ENCODE measurements at regions of chr15 and their contacts with region 1.

Region 1: DNA sequence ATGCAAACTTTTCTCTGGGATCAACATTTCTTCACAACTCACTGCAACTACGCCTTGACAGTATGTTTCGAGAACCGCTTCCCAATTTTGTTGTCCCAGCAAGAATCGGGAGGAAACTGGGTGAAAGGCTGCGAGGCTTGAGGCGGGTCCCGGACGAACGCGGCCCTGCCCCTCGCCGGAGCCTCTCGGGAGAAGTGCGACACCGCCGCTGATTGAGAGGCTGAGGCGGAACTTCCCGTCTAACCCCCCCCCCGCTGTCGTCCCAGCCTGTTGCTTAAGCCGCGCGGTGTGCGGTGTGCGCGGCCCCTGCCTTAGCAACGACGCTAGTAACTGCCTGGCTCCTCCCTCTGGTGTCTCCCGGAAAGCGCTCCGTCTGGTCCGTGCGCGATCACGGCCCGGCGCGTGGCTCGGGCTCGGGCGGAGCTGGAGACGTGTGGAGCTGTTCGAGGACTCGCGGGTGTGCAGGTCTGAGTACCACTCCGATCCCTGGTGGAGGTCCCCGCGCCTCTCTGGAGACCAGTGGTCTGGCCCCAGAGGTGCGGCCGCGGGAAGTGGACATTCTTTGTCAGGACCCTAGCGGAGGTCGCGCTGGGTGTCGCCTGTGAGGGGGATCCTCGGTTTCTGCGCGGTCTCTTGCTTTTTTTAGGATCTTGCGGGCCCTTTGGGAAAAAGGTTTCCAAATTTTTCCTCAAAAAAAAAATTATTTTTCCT is at the starts of genes DTWD1 and FAM227B:
- DNase-seq: peak; percentile 96 to 98
- ATAC-seq: peak; percentile 99 to 100 (median 100)
- H3K4me3 ChIP-seq: peak within 1 kb of the TSS; percentile 67 to 92 (median 80)
- H3K27ac ChIP-seq: peak within 1 kb of the TSS; percentile 83 to 96 (median 94)
- H3K4me1 ChIP-seq: peaks cover 0 to 34% (median 21%) of the 10 kb centered on the region in 9 donors
- H3K27me3 ChIP-seq: no peaks in the 10 kb centered on the region
- CTCF ChIP-seq: peak in 1 of 9 donors; percentile 12
- total RNA-seq, gene DTWD1: 14.8 to 23.2 (median 17.7) TPM
- total RNA-seq, gene FAM227B: 10.3 to 22.8 (median 14.6) TPM

Region 2: GRCh38 chr15:49155110-49155833 is 465.5 kb before region 1 on chr15 and contains the start of gene COPS2:
- intact Hi-C with region 1: loop called in 1 of 10 experiments (anchors 5 kb)
- DNase-seq: peak; percentile 86 to 96
- ATAC-seq: peak; percentile 98 to 99 (median 99)
- H3K4me3 ChIP-seq: peak within 1 kb of the TSS; percentile 84 to 98 (median 92)
- H3K27ac ChIP-seq: peak within 1 kb of the TSS; percentile 45 to 94 (median 88)
- H3K4me1 ChIP-seq: peaks cover 2 to 58% (median 41%) of the 10 kb centered on the region in 9 donors
- H3K27me3 ChIP-seq: no peaks in the 10 kb centered on the region
- CTCF ChIP-seq: peak in 1 of 9 donors; percentile 9
- total RNA-seq, gene COPS2: 71.3 to 91.8 (median 86.8) TPM

Region 3: DNA sequence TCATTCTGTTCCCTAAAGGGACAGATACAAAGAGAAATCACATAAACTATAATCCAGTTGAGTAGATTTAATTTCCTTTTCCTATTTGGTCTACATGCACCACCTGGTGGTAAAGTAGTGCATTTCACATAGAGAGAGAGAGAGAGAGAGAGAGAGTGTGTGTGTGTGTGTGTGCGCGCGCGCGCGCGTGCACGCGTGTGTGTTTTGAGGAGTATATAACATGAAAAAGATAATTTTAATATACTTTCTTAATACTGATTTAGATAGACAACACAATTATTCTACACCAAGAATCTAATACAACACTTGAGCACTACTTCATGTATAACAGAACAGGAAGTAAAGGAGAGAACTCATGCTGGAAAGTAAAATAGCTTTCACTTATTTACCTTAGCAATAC is 198.8 kb before region 1 on chr15:
- intact Hi-C with region 1: loop called in 4 of 10 experiments (anchors 5 to 10 kb)
- DNase-seq: peak; percentile 24 to 47
- ATAC-seq: peak; percentile 45 to 78 (median 52)
- H3K4me3 ChIP-seq: peak overlapping the region in 9 of 10 donors; percentile 2 to 54 (median 23)
- H3K27ac ChIP-seq: peak overlapping the region in 4 of 10 donors; percentile 65 to 80 (median 76)
- H3K4me1 ChIP-seq: peaks cover 0 to 8% (median 0%) of the 10 kb centered on the region in 9 donors
- H3K27me3 ChIP-seq: no peaks in the 10 kb centered on the region
- CTCF ChIP-seq: peak; percentile 39 to 83 (median 70)

Region 4: DNA sequence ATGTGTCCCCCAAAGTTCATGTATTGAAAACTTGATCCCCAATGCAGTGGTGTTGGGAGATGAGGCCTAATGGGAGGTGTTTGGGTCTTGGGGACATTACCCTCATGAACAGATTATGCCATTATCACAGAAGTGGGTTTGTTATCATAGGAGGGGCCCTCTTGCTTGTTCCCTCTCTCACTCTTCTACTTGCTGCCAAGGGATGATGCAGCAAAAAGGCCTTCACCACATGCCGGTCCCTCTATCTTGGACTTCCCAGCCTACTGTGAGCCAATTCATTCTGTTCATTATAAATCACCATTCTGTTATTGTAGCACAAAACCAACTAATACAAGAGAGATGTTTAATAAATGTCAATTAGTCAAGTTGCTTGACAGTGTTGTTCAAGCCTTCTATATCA is 47.4 kb before region 1 on chr15:
- intact Hi-C with region 1: loop called in 1 of 10 experiments (anchors 2 kb)
- DNase-seq: no peak
- ATAC-seq: no peak
- H3K4me3 ChIP-seq: no peak overlapping the region
- H3K27ac ChIP-seq: no peak overlapping the region
- H3K4me1 ChIP-seq: no peaks in the 10 kb centered on the region
- H3K27me3 ChIP-seq: no peaks in the 10 kb centered on the region
- CTCF ChIP-seq: no peak

Region 5: DNA sequence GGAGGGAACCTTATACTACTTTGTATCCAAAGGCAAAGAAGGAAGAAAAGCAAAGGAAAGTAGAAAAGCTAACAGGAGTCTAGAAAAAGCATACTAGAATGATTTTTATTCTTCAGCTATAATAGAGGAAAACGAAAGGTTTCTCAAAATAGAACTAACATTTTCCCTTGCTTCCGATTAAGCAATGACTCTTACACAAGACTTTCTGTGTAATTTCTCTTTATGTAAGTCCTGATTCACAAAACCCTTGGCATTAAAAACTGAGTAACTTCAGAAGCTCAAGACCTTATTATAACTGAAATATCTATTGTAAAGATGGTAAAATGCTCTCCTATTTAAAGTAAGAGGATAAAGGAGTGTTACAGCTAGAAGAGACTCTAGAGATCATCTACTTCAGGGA is 97.4 kb after region 1 on chr15:
- intact Hi-C with region 1: no loop called
- DNase-seq: no peak
- ATAC-seq: peak in 6 of 8 donors; percentile 41 to 80 (median 52)
- H3K4me3 ChIP-seq: no peak overlapping the region
- H3K27ac ChIP-seq: peak overlapping the region in 8 of 10 donors; percentile 1 to 79 (median 59)
- H3K4me1 ChIP-seq: peaks cover 0 to 61% (median 4%) of the 10 kb centered on the region in 9 donors
- H3K27me3 ChIP-seq: no peaks in the 10 kb centered on the region
- CTCF ChIP-seq: no peak

Region 6: GRCh38 chr15:49901996-49902684 is 281.3 kb after region 1 on chr15:
- intact Hi-C with region 1: loop called in 1 of 10 experiments (anchors 10 kb)
- DNase-seq: no peak
- ATAC-seq: peak in 4 of 8 donors; percentile 7 to 24 (median 16)
- H3K4me3 ChIP-seq: peak overlapping the region in 2 of 10 donors; percentile 3 to 23
- H3K27ac ChIP-seq: peak overlapping the region; percentile 8 to 87 (median 78)
- H3K4me1 ChIP-seq: peaks cover 0 to 46% (median 18%) of the 10 kb centered on the region in 9 donors
- H3K27me3 ChIP-seq: no peaks in the 10 kb centered on the region
- CTCF ChIP-seq: peak in 5 of 9 donors; percentile 31 to 47 (median 33)

Region 7: GRCh38 chr15:50003786-50004334 is 383.0 kb after region 1 on chr15:
- intact Hi-C with region 1: loop called in 4 of 10 experiments (anchors 1 to 10 kb)
- DNase-seq: peak; percentile 88 to 89
- ATAC-seq: peak; percentile 93 to 100 (median 99)
- H3K4me3 ChIP-seq: no peak overlapping the region
- H3K27ac ChIP-seq: peak overlapping the region in 6 of 10 donors; percentile 11 to 68 (median 42)
- H3K4me1 ChIP-seq: peaks cover 0 to 19% (median 4%) of the 10 kb centered on the region in 9 donors
- H3K27me3 ChIP-seq: no peaks in the 10 kb centered on the region
- CTCF ChIP-seq: peak; percentile 59 to 87 (median 79)

Region 8: GRCh38 chr15:50051803-50052419 is 431.1 kb after region 1 on chr15:
- intact Hi-C with region 1: loop called in 1 of 10 experiments (anchors 5 kb)
- DNase-seq: peak in 1 of 2 donors; percentile 64
- ATAC-seq: peak in 5 of 8 donors; percentile 17 to 58 (median 30)
- H3K4me3 ChIP-seq: no peak overlapping the region
- H3K27ac ChIP-seq: peak overlapping the region in 1 of 10 donors; percentile 86
- H3K4me1 ChIP-seq: peaks cover 0 to 51% (median 0%) of the 10 kb centered on the region in 9 donors
- H3K27me3 ChIP-seq: no peaks in the 10 kb centered on the region
- CTCF ChIP-seq: peak; percentile 15 to 72 (median 64)

Measured in heart right ventricle (tissue), 16 donors.